Activated B cell treated with CpG ODN at 0.5 μM for 24 hours (primary cell): ENCODE measurements at regions of chr12 and their contacts with region 1.

Region 1: DNA sequence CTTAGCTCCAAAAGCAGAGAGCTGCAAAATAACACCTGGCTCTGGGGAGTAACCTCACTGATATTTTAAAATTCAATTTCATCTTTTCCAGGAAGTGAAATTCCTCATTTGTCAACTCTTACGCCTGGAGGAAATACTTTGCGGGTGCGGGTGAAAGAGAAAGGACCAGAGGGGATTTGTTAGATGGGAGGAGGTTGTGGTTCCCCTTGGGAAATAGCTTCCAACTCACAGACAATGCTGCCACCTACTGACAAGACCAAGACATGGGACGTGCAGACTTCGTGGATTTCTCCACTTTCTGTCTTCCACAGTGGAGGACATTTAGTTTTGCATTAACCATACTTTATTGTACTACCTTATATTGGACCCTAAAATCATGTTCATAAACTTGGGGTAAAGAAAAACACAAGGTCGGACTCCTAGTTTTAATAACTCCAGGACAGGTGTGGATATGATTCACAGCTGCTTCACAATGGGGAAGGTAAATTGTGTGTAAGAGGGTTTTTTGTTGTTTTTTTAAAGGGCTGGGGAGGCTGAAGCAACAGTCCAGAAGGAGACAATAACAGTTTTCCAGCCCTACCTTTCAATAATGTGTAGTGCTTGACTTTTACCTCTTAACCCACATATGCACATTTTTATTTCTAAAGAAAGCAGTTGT is 10.8 kb downstream of the FBXL14 start:
- DNase-seq: peak; percentile 36
- ATAC-seq: peak; percentile 96
- H3K4me3 Mint-ChIP-seq: peak overlapping the region; percentile 69
- H3K27ac Mint-ChIP-seq: no peak overlapping the region
- H3K4me1 Mint-ChIP-seq: peaks cover 17% of the 10 kb centered on the region
- H3K27me3 Mint-ChIP-seq: no peaks in the 10 kb centered on the region
- CTCF ChIP-seq: peak; percentile 96

Region 2: DNA sequence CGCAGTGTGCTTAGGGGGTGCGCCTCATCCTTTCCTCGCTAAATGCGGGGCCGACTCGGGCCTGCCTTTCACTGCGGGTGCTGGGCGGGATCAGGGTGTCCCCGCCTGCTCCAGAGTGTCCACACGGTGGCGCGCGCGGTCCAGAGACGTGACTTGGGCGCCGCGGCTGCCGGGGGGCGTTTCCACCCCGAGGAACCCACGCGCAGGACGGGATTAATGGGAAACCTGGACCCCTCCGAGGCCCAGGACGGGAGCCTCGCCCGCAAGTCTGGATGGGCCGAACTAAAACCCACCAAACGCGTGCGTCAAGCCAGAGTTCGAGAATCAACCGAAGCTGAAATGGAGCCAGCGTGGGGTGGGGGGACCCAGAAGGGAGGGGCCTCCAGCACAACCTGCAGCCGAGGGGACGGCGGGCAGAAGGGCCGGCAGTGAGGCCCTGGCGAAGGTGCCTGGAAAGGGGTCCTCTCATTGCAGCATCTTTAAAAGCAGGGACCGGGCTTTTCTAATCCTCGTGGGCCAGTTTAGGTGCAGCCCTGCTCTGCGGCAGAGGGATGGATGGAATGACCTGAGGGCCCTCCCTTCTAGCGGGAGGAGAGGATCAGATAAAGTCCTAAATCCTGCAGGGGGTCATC is 1013.6 kb before region 1 on chr12:
- CTCF ChIA-PET with region 1: interaction called, 14 read pairs
- POLR2A ChIA-PET with region 1: interaction called, 4 read pairs
- intact Hi-C with region 1: loop called (anchors 1 kb)
- DNase-seq: peak; percentile 84
- ATAC-seq: peak; percentile 98
- H3K4me3 Mint-ChIP-seq: peak overlapping the region; percentile 81
- H3K27ac Mint-ChIP-seq: no peak overlapping the region
- H3K4me1 Mint-ChIP-seq: peaks cover 4% of the 10 kb centered on the region
- H3K27me3 Mint-ChIP-seq: no peaks in the 10 kb centered on the region
- CTCF ChIP-seq: no peak

Region 3: DNA sequence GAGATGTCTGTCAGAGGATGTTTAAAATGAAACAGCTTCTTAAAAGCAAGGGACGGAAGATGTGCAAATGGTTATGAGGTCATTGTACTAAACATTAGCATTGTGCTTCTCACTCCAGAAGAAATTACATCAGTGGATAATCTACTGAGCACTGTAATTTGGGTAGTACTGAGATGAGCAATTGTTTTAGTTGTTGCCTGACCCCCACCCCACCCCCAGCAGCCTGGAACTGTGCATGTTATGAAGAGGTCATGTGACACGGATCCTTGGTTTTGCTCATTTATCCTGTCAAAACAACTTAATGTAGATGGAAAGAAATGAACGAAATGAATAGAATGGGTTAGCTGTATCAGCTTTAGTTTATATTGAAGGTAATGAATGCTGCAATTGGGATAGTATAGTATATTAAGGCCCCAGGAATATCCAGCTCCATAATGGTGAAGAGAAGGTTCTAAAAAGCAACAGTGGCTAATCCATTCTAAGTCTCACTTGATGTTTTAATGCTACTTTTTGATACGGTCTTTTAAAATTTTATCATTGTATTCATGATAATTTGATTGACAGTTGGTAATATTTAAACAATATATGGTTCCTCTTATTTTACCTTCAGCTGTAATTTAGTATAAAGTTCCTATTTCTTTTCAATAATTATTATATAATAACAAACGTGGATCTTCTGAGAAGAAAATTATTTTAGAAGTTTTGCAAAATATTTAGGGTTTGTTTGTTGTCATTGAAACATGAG is 772.7 kb before region 1 on chr12:
- CTCF ChIA-PET with region 1: interaction called, 5 read pairs
- POLR2A ChIA-PET with region 1: no interaction called
- intact Hi-C with region 1: loop called (anchors 1 kb)
- DNase-seq: no peak
- ATAC-seq: peak; percentile 49
- H3K4me3 Mint-ChIP-seq: no peak overlapping the region
- H3K27ac Mint-ChIP-seq: peak overlapping the region; percentile 41
- H3K4me1 Mint-ChIP-seq: peaks cover 59% of the 10 kb centered on the region
- H3K27me3 Mint-ChIP-seq: no peaks in the 10 kb centered on the region
- CTCF ChIP-seq: no peak

Region 4: DNA sequence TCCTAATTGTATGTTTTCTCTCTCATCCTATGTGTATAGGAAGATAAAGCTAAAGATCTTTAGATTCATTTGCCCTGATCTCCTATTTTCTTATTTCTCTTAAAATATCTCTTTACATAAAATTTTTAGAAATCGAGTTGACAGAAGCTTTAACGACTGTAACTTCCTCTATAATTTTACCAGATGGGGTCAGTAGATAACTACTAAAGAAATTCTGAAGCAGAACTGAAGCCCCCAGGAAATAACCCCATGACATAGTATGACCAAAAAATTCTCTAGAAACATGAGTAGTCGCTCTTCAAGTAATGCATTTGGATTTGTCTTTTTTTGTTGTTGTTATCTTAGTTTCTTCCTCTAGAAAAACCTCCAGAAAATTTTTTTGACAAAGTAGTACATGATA is 304.5 kb before region 1 on chr12:
- CTCF ChIA-PET with region 1: interaction called, 4 read pairs
- POLR2A ChIA-PET with region 1: no interaction called
- intact Hi-C with region 1: loop called (anchors 2 kb)
- DNase-seq: no peak
- ATAC-seq: no peak
- H3K4me3 Mint-ChIP-seq: no peak overlapping the region
- H3K27ac Mint-ChIP-seq: no peak overlapping the region
- H3K4me1 Mint-ChIP-seq: peaks cover 6% of the 10 kb centered on the region
- H3K27me3 Mint-ChIP-seq: no peaks in the 10 kb centered on the region
- CTCF ChIP-seq: no peak

Region 5: GRCh38 chr12:1533602-1534304 is 49.8 kb before region 1 on chr12:
- CTCF ChIA-PET with region 1: interaction called, 3 read pairs
- POLR2A ChIA-PET with region 1: no interaction called
- intact Hi-C with region 1: loop called (anchors 1 kb)
- DNase-seq: peak; percentile 25
- ATAC-seq: peak; percentile 82
- H3K4me3 Mint-ChIP-seq: peak overlapping the region; percentile 76
- H3K27ac Mint-ChIP-seq: peak overlapping the region; percentile 13
- H3K4me1 Mint-ChIP-seq: peaks cover 30% of the 10 kb centered on the region
- H3K27me3 Mint-ChIP-seq: peaks cover 47% of the 10 kb centered on the region
- CTCF ChIP-seq: no peak

Region 6: GRCh38 chr12:1594261-1595025 is 10.9 kb after region 1 on chr12 and contains the start of gene FBXL14:
- CTCF ChIA-PET with region 1: interaction called, 12 read pairs
- POLR2A ChIA-PET with region 1: interaction called, 14 read pairs
- intact Hi-C with region 1: loop called (anchors 1 kb)
- DNase-seq: peak; percentile 91
- ATAC-seq: peak; percentile 65
- H3K4me3 Mint-ChIP-seq: peak within 1 kb of the TSS; percentile 92
- H3K27ac Mint-ChIP-seq: peak within 1 kb of the TSS; percentile 92
- H3K4me1 Mint-ChIP-seq: peaks cover 52% of the 10 kb centered on the region
- H3K27me3 Mint-ChIP-seq: no peaks in the 10 kb centered on the region
- CTCF ChIP-seq: no peak
- total RNA-seq, gene FBXL14: 19.4 and 21.6 TPM in 2 replicates